ENCODE measurements at regions of chrX and their contacts with region 1.

Region 1: GRCh38 chrX:153649178-153649914 is 2.3 kb downstream of the DUSP9 start:
- DNase-seq: no peak
- ATAC-seq: peak; percentile 76
- H3K4me3 ChIP-seq: no peak overlapping the region
- H3K27ac ChIP-seq: no peak overlapping the region
- H3K4me1 ChIP-seq: peaks cover 5% of the 10 kb centered on the region; the same call in 1 of the 2 replicates
- H3K27me3 ChIP-seq: no peaks in the 10 kb centered on the region; the same call in 1 of the 2 replicates
- CTCF ChIP-seq: peak; percentile 82

Region 2: DNA sequence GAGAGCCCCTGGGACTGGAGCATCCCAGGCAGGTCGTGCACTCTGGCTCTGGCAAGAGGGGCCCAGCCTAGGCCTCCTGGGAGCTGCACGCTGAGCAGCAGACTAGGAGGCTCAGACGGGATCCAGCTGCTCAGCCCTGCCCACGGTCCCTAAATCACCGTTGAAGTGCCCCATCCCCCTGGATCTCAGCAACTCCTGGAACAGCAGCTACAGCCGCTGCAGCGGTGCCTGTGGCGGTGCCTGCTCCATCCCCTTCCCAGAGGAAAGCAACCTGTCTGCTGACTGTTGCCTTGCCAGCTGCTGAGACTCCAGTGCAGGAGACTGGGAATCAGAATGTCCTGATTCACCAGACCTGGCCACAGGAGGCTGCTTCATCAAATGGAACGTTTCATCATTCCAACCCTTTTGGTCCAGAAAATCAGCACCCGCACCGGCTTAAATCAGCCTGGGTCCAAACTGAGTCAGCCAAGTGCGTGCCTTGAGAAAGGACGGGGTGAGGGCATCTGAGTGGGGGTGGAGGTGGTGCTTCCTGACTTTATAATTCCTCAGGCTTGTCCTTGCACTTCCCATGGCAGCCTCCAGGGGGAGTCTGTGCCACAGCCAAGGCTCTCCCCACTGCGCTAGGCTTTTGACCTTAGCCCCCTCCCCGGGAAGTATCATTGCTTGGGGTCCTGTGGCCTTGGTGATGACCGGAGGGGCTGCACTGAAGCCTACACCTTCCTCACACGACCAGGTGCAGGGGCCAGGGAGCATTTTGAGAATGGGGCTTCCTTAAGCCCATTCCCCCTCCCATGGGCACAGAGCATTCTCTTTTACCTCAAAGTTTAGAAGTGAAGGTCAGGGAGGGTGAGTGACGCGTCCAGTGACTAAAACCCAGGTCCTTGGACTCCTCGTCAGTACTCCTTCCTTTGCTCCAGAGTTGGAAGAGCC is 744.9 kb before region 1 on chrX:
- CTCF ChIA-PET with region 1: no interaction called
- POLR2A ChIA-PET with region 1: no interaction called
- in situ Hi-C with region 1: no loop called
- intact Hi-C with region 1: no loop called
- DNase-seq: no peak
- ATAC-seq: peak; percentile 85
- H3K4me3 ChIP-seq: no peak overlapping the region
- H3K27ac ChIP-seq: no peak overlapping the region
- H3K4me1 ChIP-seq: peaks cover 3% of the 10 kb centered on the region; the same call in 1 of the 2 replicates
- H3K27me3 ChIP-seq: no peaks in the 10 kb centered on the region
- CTCF ChIP-seq: no peak

Region 3: GRCh38 chrX:153539171-153539978 is 110.0 kb before region 1 on chrX:
- CTCF ChIA-PET with region 1: interaction called, 3 read pairs
- POLR2A ChIA-PET with region 1: no interaction called
- in situ Hi-C with region 1: no loop called
- intact Hi-C with region 1: loop called (anchors 5 kb)
- DNase-seq: peak; percentile 28
- ATAC-seq: peak; percentile 94
- H3K4me3 ChIP-seq: no peak overlapping the region
- H3K27ac ChIP-seq: no peak overlapping the region
- H3K4me1 ChIP-seq: no peaks in the 10 kb centered on the region; the same call in 1 of the 2 replicates
- H3K27me3 ChIP-seq: no peaks in the 10 kb centered on the region
- CTCF ChIP-seq: no peak

Region 4: DNA sequence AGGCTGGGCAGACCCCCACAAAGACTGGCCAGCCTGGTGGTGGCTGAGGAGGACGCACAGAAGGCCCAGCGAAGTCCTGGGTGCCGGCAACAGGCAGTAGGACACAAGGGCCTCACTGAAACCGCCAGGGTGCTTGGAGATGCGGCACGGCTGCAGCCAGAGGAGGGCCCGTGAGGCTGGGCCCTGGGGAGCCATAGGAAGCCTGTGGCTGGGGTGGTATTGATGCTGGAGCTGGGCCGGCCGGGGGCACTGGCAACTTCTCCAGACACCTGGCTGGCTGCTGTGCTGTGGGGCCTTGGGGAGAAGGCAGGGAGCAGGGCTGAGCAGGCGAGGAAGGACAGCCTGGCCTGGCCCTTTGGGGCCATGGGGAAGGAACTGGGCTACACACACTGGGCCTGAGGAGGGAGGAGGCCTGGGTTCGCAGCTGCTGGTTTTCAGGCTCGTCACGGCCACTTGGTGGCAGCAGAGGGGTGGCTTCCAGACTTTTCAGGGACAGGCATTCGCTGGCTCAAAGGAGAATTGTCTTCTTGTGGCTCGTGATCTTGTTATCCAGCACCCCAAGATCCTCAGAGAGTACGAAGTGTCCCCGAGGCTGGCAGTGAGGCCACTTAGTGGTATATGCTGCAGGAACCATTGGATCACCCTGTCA is 94.7 kb before region 1 on chrX:
- CTCF ChIA-PET with region 1: no interaction called
- POLR2A ChIA-PET with region 1: no interaction called
- in situ Hi-C with region 1: no loop called
- intact Hi-C with region 1: loop called (anchors 5 kb)
- DNase-seq: peak; percentile 24
- ATAC-seq: peak; percentile 90
- H3K4me3 ChIP-seq: no peak overlapping the region
- H3K27ac ChIP-seq: no peak overlapping the region
- H3K4me1 ChIP-seq: no peaks in the 10 kb centered on the region
- H3K27me3 ChIP-seq: no peaks in the 10 kb centered on the region
- CTCF ChIP-seq: no peak

Measured in Panc1 (cell line).